ENCODE measurements at regions of chr3 and their contacts with region 1.

Region 1: GRCh38 chr3:37700466-37701248 is 161.0 kb upstream of the CTDSPL start:
- DNase-seq: no peak
- ATAC-seq: no peak
- H3K4me3 ChIP-seq: no peak overlapping the region
- H3K27ac ChIP-seq: no peak overlapping the region
- H3K4me1 ChIP-seq: no peaks in the 10 kb centered on the region
- H3K27me3 ChIP-seq: peaks cover 2 to 10% of the 10 kb centered on the region in 2 experiments; a peak in 2 of 5 replicates
- CTCF ChIP-seq: peak in 1 of 3 experiments; percentile 44; a peak in 2 of 6 replicates
- EP300 ChIP-seq: no peak
- POLR2A ChIP-seq: no peak
- RAD21 ChIP-seq: peak in 1 of 2 experiments; percentile 52; a peak in 2 of 4 replicates

Region 2: DNA sequence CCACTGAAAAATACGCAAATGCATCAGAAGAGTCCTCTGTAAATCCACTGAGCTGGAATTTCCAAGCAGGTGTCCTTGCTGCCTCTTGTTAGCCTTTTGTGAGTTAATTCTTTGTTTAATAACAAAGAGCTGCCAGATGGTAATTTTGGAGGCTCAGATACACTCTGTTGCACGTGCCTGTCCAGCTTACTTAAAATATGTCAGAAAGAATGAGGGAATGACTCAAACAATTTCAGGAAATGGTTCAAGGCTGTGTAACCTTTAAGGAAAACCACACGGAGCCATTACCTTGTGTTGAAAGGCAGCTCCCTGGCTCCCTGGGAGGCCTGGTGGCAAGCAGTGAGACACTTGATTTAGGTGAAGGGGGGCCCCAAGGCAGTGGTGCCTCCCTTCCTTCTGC is 141.2 kb before region 1 on chr3:
- CTCF ChIA-PET with region 1: interaction called, 3 read pairs
- POLR2A ChIA-PET with region 1: no interaction called
- in situ Hi-C with region 1: no loop called
- intact Hi-C with region 1: loop called (anchors 10 kb)
- DNase-seq: no peak
- ATAC-seq: no peak
- H3K4me3 ChIP-seq: no peak overlapping the region
- H3K27ac ChIP-seq: no peak overlapping the region
- H3K4me1 ChIP-seq: no peaks in the 10 kb centered on the region
- H3K27me3 ChIP-seq: peaks cover 0 to 22% of the 10 kb centered on the region in 2 experiments; a peak in 3 of 5 replicates
- CTCF ChIP-seq: no peak
- EP300 ChIP-seq: no peak
- POLR2A ChIP-seq: no peak
- RAD21 ChIP-seq: no peak

Region 3: GRCh38 chr3:37753428-37753827 is 52.8 kb after region 1 on chr3:
- CTCF ChIA-PET with region 1: interaction called, 10 read pairs
- POLR2A ChIA-PET with region 1: no interaction called
- in situ Hi-C with region 1: no loop called
- intact Hi-C with region 1: no loop called
- DNase-seq: no peak
- ATAC-seq: no peak
- H3K4me3 ChIP-seq: no peak overlapping the region
- H3K27ac ChIP-seq: no peak overlapping the region
- H3K4me1 ChIP-seq: no peaks in the 10 kb centered on the region
- H3K27me3 ChIP-seq: peaks cover 13 to 23% of the 10 kb centered on the region in 2 experiments
- CTCF ChIP-seq: no peak
- EP300 ChIP-seq: no peak
- POLR2A ChIP-seq: no peak
- RAD21 ChIP-seq: no peak